ENCODE measurements at regions of chr3 and their contacts with region 1.

Region 1: GRCh38 chr3:184874709-184875644 is 63.0 kb downstream of the VPS8 start:
- DNase-seq: peak; percentile 4
- H3K4me3 ChIP-seq: no peak overlapping the region
- H3K27ac ChIP-seq: no peak overlapping the region
- H3K4me1 ChIP-seq: no peaks in the 10 kb centered on the region
- H3K27me3 ChIP-seq: no peaks in the 10 kb centered on the region
- CTCF ChIP-seq: peak; percentile 43 to 74

Region 2: GRCh38 chr3:184371570-184372018 is 503.4 kb before region 1 on chr3:
- CTCF ChIA-PET with region 1: no interaction called
- dilution Hi-C with region 1: no loop called
- in situ Hi-C with region 1: no loop called
- intact Hi-C with region 1: no loop called
- DNase-seq: peak; percentile 73
- H3K4me3 ChIP-seq: no peak overlapping the region
- H3K27ac ChIP-seq: no peak overlapping the region
- H3K4me1 ChIP-seq: peaks cover 4% of the 10 kb centered on the region
- H3K27me3 ChIP-seq: no peaks in the 10 kb centered on the region
- CTCF ChIP-seq: peak; percentile 98 to 99

Region 3: GRCh38 chr3:184864000-184864399 is 11.0 kb before region 1 on chr3:
- CTCF ChIA-PET with region 1: no interaction called
- dilution Hi-C with region 1: no loop called
- in situ Hi-C with region 1: no loop called
- intact Hi-C with region 1: no loop called
- DNase-seq: no peak
- H3K4me3 ChIP-seq: no peak overlapping the region
- H3K27ac ChIP-seq: no peak overlapping the region
- H3K4me1 ChIP-seq: no peaks in the 10 kb centered on the region
- H3K27me3 ChIP-seq: no peaks in the 10 kb centered on the region
- CTCF ChIP-seq: no peak

Region 4: GRCh38 chr3:185176750-185177359 is 301.9 kb after region 1 on chr3:
- CTCF ChIA-PET with region 1: no interaction called
- dilution Hi-C with region 1: no loop called
- in situ Hi-C with region 1: loop called in 1 of 2 experiments (anchors 25 kb)
- intact Hi-C with region 1: loop called (anchors 1 kb)
- DNase-seq: no peak
- H3K4me3 ChIP-seq: no peak overlapping the region
- H3K27ac ChIP-seq: no peak overlapping the region
- H3K4me1 ChIP-seq: no peaks in the 10 kb centered on the region
- H3K27me3 ChIP-seq: no peaks in the 10 kb centered on the region
- CTCF ChIP-seq: peak; percentile 56 to 63

Region 5: DNA sequence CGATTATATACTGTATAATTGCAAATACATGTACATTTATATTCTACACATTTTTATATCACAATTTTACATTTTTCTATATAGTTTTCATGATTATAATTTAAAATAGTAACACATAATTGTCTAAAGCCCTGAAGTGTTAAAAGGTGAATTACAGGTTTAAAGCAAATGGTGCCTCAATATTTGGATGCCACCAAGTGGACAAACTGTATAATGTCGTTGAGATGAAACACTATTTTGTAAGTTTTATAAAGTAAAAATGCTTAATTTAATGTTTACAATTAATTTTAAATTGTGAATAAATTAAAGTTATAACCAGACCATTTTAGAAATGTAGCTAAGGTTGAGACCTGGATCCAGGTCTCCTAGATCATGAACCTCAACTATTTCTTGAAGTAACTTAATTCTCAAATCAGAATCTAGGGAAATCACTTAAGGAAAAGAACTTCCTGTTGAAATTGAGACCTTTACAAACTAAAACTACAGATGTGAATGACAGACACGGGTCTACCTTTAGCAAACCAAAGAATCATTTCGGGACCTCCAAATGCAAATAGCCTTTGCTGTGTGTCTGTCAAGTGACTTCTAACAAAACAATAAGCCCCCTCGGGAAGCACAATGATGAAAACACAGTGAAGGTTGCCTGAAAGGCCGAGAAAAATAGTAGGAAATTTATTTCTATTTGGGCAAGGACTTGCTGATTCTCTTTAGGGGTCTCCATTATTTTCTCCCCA is 341.1 kb after region 1 on chr3:
- CTCF ChIA-PET with region 1: no interaction called
- dilution Hi-C with region 1: no loop called
- in situ Hi-C with region 1: loop called in 1 of 2 experiments (anchors 25 kb)
- intact Hi-C with region 1: loop called (anchors 1 kb)
- DNase-seq: peak; percentile 14
- H3K4me3 ChIP-seq: no peak overlapping the region
- H3K27ac ChIP-seq: no peak overlapping the region
- H3K4me1 ChIP-seq: no peaks in the 10 kb centered on the region
- H3K27me3 ChIP-seq: no peaks in the 10 kb centered on the region
- CTCF ChIP-seq: peak; percentile 35 to 67

Region 6: DNA sequence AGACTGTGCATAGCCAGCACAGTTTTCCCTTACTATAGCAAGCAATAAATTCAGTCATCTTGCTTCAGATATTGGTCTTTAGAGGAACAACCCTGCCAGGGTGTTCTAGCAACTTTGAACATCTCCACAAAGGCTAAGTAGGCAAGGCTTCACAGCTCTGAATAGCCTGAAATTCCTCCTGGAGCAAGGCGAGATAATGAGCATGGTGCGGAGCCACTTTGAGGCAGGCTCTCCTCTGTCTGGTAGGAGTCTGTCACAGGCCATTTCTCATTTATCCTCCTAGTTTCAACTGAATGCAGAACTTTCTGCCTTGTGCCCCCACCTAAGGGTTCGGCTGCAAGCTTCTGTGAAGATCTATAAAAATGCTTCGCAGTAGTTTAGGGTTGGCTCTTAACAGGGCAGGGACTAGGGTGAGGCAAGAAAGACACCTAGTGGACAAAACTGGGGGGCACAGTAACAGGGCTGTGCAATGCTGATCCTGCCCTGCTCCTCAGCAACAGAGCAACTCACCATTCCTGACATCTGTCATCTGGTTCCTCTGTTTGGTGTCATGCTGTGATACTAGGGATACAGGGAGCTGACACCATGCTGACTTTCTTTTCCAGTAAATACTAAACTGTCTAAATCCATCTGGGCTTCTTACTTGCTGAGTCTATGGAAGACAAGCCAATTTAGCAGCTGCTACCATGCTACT is 395.4 kb after region 1 on chr3:
- CTCF ChIA-PET with region 1: no interaction called
- dilution Hi-C with region 1: no loop called
- in situ Hi-C with region 1: no loop called
- intact Hi-C with region 1: loop called (anchors 1 kb)
- DNase-seq: peak; percentile 23
- H3K4me3 ChIP-seq: no peak overlapping the region
- H3K27ac ChIP-seq: no peak overlapping the region
- H3K4me1 ChIP-seq: peaks cover 4% of the 10 kb centered on the region
- H3K27me3 ChIP-seq: no peaks in the 10 kb centered on the region
- CTCF ChIP-seq: peak; percentile 52 to 55

Region 7: GRCh38 chr3:185308126-185308754 is 433.3 kb after region 1 on chr3:
- CTCF ChIA-PET with region 1: no interaction called
- dilution Hi-C with region 1: no loop called
- in situ Hi-C with region 1: no loop called
- intact Hi-C with region 1: loop called (anchors 1 kb)
- DNase-seq: peak; percentile 59
- H3K4me3 ChIP-seq: no peak overlapping the region
- H3K27ac ChIP-seq: no peak overlapping the region
- H3K4me1 ChIP-seq: no peaks in the 10 kb centered on the region
- H3K27me3 ChIP-seq: no peaks in the 10 kb centered on the region
- CTCF ChIP-seq: peak; percentile 74 to 88

Region 8: GRCh38 chr3:185527364-185527763 is 652.4 kb after region 1 on chr3:
- CTCF ChIA-PET with region 1: no interaction called
- dilution Hi-C with region 1: no loop called
- in situ Hi-C with region 1: no loop called
- intact Hi-C with region 1: no loop called
- DNase-seq: no peak
- H3K4me3 ChIP-seq: no peak overlapping the region
- H3K27ac ChIP-seq: no peak overlapping the region
- H3K4me1 ChIP-seq: no peaks in the 10 kb centered on the region
- H3K27me3 ChIP-seq: no peaks in the 10 kb centered on the region
- CTCF ChIP-seq: no peak

Region 9: DNA sequence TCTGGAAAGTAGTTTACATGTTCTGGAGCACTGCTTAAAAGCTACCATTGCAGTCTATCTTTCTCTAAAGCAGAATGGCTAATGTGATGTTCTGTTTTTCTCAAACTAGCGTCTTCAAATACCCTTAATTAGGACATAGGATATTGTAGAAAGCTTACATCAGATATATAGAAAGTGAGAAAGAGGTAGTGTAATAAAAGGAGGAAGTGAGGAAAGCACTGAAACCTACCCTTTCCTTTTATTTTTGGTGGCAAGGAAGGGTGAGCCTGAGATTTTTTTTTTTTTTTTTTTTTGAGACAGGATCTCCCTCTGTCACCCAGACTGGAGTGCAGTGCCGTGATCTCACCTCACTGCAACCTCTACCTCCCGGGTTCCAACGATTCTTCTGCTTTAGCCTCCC is 720.5 kb after region 1 on chr3:
- CTCF ChIA-PET with region 1: no interaction called
- dilution Hi-C with region 1: no loop called
- in situ Hi-C with region 1: no loop called
- intact Hi-C with region 1: no loop called
- DNase-seq: no peak
- H3K4me3 ChIP-seq: no peak overlapping the region
- H3K27ac ChIP-seq: no peak overlapping the region
- H3K4me1 ChIP-seq: no peaks in the 10 kb centered on the region
- H3K27me3 ChIP-seq: no peaks in the 10 kb centered on the region
- CTCF ChIP-seq: no peak